ENCODE measurements at regions of chr1 and their contacts with region 1.

Region 1: DNA sequence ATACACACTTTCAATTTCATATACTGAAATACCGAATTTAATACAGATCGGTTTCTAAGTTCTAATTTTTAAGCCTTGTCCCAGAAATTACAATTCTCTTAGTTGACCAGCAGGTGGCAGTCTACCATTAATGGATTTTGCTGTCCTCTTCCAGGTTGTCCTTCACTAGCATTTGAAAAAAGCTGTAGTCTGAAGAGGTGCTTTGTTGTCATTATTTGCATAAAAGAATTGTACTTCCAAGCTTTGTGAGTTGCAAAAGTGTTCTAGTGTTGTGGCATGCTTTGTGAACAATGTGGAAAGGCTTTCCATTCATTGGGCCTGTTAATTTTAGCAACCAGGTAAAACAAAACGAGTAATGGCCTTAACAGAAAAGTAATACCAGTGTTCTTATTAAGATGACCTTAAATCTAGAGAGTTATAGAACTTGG is 193.6 kb downstream of the RPS6KC1 start:
- DNase-seq: peak in 5 of 9 donors; percentile 13 to 44 (median 34)
- ATAC-seq: peak; percentile 40
- H3K4me3 ChIP-seq: no peak overlapping the region
- H3K4me3 Mint-ChIP-seq: no peak overlapping the region
- H3K27ac ChIP-seq: no peak overlapping the region
- H3K27ac Mint-ChIP-seq: no peak overlapping the region
- H3K4me1 ChIP-seq: no peaks in the 10 kb centered on the region
- H3K4me1 Mint-ChIP-seq: no peaks in the 10 kb centered on the region
- H3K27me3 ChIP-seq: no peaks in the 10 kb centered on the region
- H3K27me3 Mint-ChIP-seq: no peaks in the 10 kb centered on the region

Region 2: GRCh38 chr1:213122514-213122929 is 122.2 kb before region 1 on chr1:
- CTCF ChIA-PET with region 1: interaction called, 3 read pairs
- POLR2A ChIA-PET with region 1: no interaction called
- intact Hi-C with region 1: loop called in 1 of 2 experiments (anchors 5 kb)
- DNase-seq: peak in 5 of 9 donors; percentile 8 to 21 (median 16)
- ATAC-seq: no peak
- H3K4me3 ChIP-seq: no peak overlapping the region
- H3K4me3 Mint-ChIP-seq: no peak overlapping the region
- H3K27ac ChIP-seq: no peak overlapping the region
- H3K27ac Mint-ChIP-seq: no peak overlapping the region
- H3K4me1 ChIP-seq: no peaks in the 10 kb centered on the region
- H3K4me1 Mint-ChIP-seq: peaks cover 0 to 8% (median 2%) of the 10 kb centered on the region in 7 donors
- H3K27me3 ChIP-seq: no peaks in the 10 kb centered on the region
- H3K27me3 Mint-ChIP-seq: no peaks in the 10 kb centered on the region

Region 3: GRCh38 chr1:213335084-213335483 is 90.4 kb after region 1 on chr1:
- CTCF ChIA-PET with region 1: no interaction called
- POLR2A ChIA-PET with region 1: no interaction called
- intact Hi-C with region 1: no loop called
- DNase-seq: no peak
- ATAC-seq: no peak
- H3K4me3 ChIP-seq: no peak overlapping the region
- H3K4me3 Mint-ChIP-seq: no peak overlapping the region
- H3K27ac ChIP-seq: no peak overlapping the region
- H3K27ac Mint-ChIP-seq: no peak overlapping the region
- H3K4me1 ChIP-seq: no peaks in the 10 kb centered on the region
- H3K4me1 Mint-ChIP-seq: peaks cover 0 to 1% (median 0%) of the 10 kb centered on the region in 7 donors
- H3K27me3 ChIP-seq: no peaks in the 10 kb centered on the region
- H3K27me3 Mint-ChIP-seq: peaks cover 0 to 12% (median 8%) of the 10 kb centered on the region in 5 donors

Region 4: GRCh38 chr1:213374369-213374768 is 129.7 kb after region 1 on chr1:
- CTCF ChIA-PET with region 1: no interaction called
- POLR2A ChIA-PET with region 1: no interaction called
- intact Hi-C with region 1: loop called in 1 of 2 experiments (anchors 5 kb)
- DNase-seq: peak; percentile 12 to 60 (median 42)
- ATAC-seq: peak; percentile 61
- H3K4me3 ChIP-seq: no peak overlapping the region
- H3K4me3 Mint-ChIP-seq: no peak overlapping the region
- H3K27ac ChIP-seq: no peak overlapping the region
- H3K27ac Mint-ChIP-seq: no peak overlapping the region
- H3K4me1 ChIP-seq: no peaks in the 10 kb centered on the region
- H3K4me1 Mint-ChIP-seq: no peaks in the 10 kb centered on the region
- H3K27me3 ChIP-seq: no peaks in the 10 kb centered on the region
- H3K27me3 Mint-ChIP-seq: peaks cover 0 to 7% (median 0%) of the 10 kb centered on the region in 5 donors

Region 5: DNA sequence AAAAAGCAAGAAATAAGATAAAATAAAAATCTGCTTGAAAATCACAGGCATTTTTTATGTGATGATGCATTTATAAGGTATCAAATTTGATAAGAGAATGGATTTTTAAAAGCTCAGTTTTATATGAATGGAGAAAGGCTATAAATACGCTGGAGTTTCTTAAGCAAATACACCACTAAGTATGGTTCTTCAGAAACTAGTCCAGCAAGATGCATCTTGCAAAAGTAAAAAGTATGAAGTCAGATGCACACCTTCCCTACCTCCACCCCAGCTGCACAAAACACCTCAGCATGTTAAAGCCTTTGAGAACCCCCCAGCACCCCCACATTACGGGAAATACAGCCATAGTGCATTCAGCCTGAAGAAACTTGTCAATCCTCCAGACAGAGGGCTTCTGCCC is 600.0 kb after region 1 on chr1:
- CTCF ChIA-PET with region 1: no interaction called
- POLR2A ChIA-PET with region 1: interaction called, 10 read pairs
- intact Hi-C with region 1: no loop called
- DNase-seq: no peak
- ATAC-seq: no peak
- H3K4me3 ChIP-seq: no peak overlapping the region
- H3K4me3 Mint-ChIP-seq: peak overlapping the region in 1 of 10 donors; percentile 13
- H3K27ac ChIP-seq: no peak overlapping the region
- H3K27ac Mint-ChIP-seq: no peak overlapping the region
- H3K4me1 ChIP-seq: peaks cover 0 to 5% of the 10 kb centered on the region in 2 donors
- H3K4me1 Mint-ChIP-seq: peaks cover 3 to 11% (median 7%) of the 10 kb centered on the region in 7 donors
- H3K27me3 ChIP-seq: no peaks in the 10 kb centered on the region
- H3K27me3 Mint-ChIP-seq: peaks cover 0 to 5% (median 0%) of the 10 kb centered on the region in 5 donors

Region 6: DNA sequence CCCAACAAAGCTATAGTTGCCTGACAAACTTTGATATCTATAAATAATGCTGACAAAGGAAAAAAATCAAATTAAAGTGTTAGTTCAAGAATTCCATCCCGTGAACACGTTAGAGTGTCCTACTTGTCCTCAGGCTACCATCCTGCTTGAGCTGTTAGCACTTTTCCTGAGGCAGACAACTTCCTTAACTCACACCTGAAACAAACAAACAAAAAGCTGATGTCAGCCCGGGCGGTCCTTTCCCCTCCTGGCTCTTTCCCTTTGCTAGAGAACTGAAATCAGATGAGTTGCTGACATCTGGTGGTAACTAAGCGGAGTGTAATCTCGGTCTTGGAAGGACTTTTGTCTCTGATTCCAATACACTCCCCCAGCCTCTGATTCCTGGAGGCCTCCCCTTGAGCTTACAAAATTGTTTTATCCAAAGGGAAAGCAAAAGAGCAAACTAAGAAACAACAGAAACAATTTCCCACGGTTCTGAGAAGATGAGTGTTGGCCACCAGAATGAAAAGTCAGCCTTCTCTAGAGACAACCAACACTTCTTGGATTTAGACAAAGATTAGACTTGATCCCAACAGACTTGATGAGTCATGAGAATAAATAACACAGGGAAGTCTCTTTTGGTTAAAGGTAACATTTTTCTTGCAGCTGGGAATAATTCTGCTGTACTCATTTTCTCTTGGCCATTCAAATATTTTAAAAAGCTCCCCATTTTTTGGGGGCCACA is 878.5 kb after region 1 on chr1:
- CTCF ChIA-PET with region 1: interaction called, 6 read pairs
- POLR2A ChIA-PET with region 1: no interaction called
- intact Hi-C with region 1: loop called (anchors 1 to 2 kb)
- DNase-seq: peak in 7 of 9 donors; percentile 39 to 62 (median 53)
- ATAC-seq: peak; percentile 61
- H3K4me3 ChIP-seq: no peak overlapping the region
- H3K4me3 Mint-ChIP-seq: peak overlapping the region in 4 of 10 donors; percentile 24 to 71 (median 48)
- H3K27ac ChIP-seq: no peak overlapping the region
- H3K27ac Mint-ChIP-seq: peak overlapping the region in 3 of 9 donors; percentile 6 to 59 (median 28)
- H3K4me1 ChIP-seq: peaks cover 0 to 3% of the 10 kb centered on the region in 2 donors
- H3K4me1 Mint-ChIP-seq: peaks cover 4 to 29% (median 11%) of the 10 kb centered on the region in 7 donors
- H3K27me3 ChIP-seq: no peaks in the 10 kb centered on the region
- H3K27me3 Mint-ChIP-seq: peaks cover 0 to 19% (median 0%) of the 10 kb centered on the region in 5 donors

Measured in naive thymus-derived CD4-positive, alpha-beta T cell (primary cell).